ENCODE measurements at regions of chr2 and their contacts with region 1.

Region 1: DNA sequence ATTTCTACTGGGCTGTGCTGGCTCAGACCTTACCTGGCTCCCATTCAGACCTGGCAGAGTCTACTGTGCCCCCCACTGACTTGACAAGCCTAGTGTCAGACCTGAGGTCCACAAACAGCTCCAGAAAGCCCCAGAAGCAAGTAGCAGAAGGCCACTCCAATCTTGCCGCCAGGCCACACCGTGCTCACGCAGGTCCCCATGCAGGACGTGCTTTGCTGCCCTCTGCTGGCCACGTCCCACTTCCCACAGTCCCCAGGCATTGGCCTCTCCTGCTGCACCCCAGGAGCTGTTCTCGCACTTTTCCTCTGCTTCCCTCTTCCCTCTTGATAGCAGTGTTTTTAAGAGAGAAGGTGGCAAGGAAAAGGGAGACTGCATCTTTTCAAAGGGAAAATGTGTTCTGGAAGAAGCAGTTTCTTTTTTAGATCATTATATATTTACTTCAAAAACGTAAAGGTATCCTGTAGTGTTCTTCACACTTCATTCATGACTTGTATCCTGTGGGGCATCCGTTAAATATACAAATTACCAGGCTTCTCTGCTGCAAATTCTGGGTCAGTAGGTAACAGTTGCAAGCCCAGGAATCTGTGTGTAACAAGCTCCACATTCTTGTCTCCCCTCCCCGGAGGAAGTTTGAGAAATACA is 81.4 kb upstream of the PAPOLG start:
- DNase-seq: peak; percentile 26
- H3K4me3 ChIP-seq: no peak overlapping the region
- H3K27ac ChIP-seq: no peak overlapping the region
- H3K27me3 ChIP-seq: peaks cover 7% of the 10 kb centered on the region
- CTCF ChIP-seq: peak; percentile 92

Region 2: GRCh38 chr2:60565463-60565862 is 109.2 kb before region 1 on chr2:
- CTCF ChIA-PET with region 1: no interaction called
- POLR2A ChIA-PET with region 1: no interaction called
- DNase-seq: no peak
- H3K4me3 ChIP-seq: no peak overlapping the region
- H3K27ac ChIP-seq: no peak overlapping the region
- H3K27me3 ChIP-seq: peaks cover 22% of the 10 kb centered on the region
- CTCF ChIP-seq: peak; percentile 46

Region 3: DNA sequence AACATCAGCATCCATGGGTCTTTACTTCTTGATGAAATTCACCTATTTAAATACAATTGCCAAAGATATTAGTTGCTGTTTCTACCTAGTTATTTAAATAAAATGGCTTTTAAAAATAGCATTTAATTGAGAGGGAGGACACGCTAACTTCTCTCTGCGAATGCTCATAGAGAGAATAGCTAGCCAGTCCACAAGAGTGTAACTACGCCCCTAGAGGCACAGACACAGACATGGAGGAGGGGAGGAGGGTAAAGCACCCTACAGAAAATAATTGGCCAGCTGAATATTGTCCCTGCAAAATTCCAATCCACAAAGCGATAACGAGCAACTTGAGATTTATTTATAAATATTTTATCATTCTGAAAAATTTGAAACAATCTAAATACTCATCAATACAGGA is 15.6 kb before region 1 on chr2:
- CTCF ChIA-PET with region 1: interaction called, 15 read pairs
- POLR2A ChIA-PET with region 1: no interaction called
- DNase-seq: no peak
- H3K4me3 ChIP-seq: no peak overlapping the region
- H3K27ac ChIP-seq: no peak overlapping the region
- H3K27me3 ChIP-seq: peaks cover 4% of the 10 kb centered on the region
- CTCF ChIP-seq: no peak